ENCODE measurements at regions of chr10 and their contacts with region 1.

Region 1: GRCh38 chr10:101646364-101646763 is 48.6 kb downstream of the FBXW4 start:
- DNase-seq: no peak
- ATAC-seq: no peak
- H3K4me3 Mint-ChIP-seq: no peak overlapping the region
- H3K27ac Mint-ChIP-seq: no peak overlapping the region
- H3K4me1 Mint-ChIP-seq: peaks cover 2% of the 10 kb centered on the region
- H3K27me3 Mint-ChIP-seq: no peaks in the 10 kb centered on the region

Region 2: DNA sequence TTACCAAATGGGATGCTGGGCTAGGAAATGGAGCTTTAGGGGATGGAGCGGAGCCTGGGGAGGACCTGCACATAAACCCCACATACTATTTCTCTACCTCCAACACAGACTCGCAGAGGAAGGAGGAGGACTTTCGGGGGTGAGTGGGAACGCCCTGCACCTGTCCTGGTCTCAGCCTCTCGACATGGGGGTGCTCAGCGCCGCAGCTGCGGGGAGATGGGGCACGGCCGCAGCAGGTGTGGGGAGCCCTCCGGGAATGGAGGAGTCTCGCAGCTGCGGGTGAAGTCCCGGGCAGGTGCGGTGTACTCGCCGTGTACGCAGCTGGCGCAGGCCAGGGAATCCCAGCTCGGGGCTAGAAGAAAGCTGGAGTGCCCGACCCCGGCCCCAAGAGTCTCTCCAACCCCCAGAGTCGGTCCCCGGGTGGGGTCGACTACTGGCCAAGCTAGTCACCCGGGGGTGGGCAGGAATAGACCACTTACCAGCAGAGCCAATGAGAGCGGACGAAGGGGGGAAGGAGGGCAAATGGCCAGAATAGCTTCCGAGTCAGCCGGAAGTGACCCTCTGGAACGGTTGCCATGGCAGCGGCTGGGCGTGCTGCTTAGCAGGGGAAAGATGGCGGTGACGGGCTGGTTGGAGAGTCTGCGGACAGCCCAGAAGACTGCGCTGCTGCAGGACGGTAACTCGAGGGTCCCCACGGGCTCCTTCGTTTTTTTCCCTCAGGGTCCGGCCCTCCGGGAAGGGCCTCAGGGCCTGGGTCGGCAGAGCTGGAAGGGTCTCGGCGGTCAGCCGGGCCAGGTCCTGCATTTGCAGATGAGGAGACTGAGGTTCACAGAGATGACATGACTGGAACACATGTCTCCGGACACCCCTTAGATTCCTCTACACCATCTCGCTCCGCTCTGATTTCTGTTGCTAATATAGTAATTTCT is 58.4 kb before region 1 on chr10 and contains the starts of genes DPCD and POLL:
- CTCF ChIA-PET with region 1: no interaction called
- POLR2A ChIA-PET with region 1: no interaction called
- intact Hi-C with region 1: no loop called
- DNase-seq: peak; percentile 97
- ATAC-seq: peak; percentile 98
- H3K4me3 Mint-ChIP-seq: peak within 1 kb of the TSS; percentile 86
- H3K27ac Mint-ChIP-seq: peak within 1 kb of the TSS; percentile 81
- H3K4me1 Mint-ChIP-seq: peaks cover 18% of the 10 kb centered on the region
- H3K27me3 Mint-ChIP-seq: no peaks in the 10 kb centered on the region
- total RNA-seq, gene DPCD: 15.5 to 19.3 TPM
- total RNA-seq, gene POLL: 30.2 to 31.4 TPM

Region 3: GRCh38 chr10:101629837-101630632 is 16.3 kb before region 1 on chr10:
- CTCF ChIA-PET with region 1: no interaction called
- POLR2A ChIA-PET with region 1: no interaction called
- intact Hi-C with region 1: loop called in 1 of 2 experiments (anchors 2 kb)
- DNase-seq: no peak
- ATAC-seq: no peak
- H3K4me3 Mint-ChIP-seq: no peak overlapping the region
- H3K27ac Mint-ChIP-seq: no peak overlapping the region
- H3K4me1 Mint-ChIP-seq: peaks cover 5% of the 10 kb centered on the region
- H3K27me3 Mint-ChIP-seq: no peaks in the 10 kb centered on the region

Region 4: DNA sequence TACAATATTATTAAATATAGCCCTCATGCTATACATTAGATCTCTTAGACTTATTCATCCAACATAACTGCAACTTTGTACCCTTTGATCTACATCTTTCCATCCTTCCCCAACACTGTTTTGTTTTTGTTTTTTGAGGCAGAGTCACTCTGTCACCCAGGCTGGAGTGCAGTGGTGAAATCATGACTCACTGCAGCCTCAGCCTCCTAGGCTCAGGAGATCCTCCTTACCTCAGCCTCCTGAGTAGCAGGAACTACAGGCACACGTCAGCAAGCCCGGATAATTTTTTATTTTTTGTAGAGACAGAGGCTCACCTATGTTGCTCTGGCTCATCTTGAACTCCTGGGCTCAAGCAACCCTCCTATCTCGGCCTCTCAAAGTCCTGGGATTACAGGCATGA is 1493.4 kb after region 1 on chr10:
- CTCF ChIA-PET with region 1: no interaction called
- POLR2A ChIA-PET with region 1: no interaction called
- intact Hi-C with region 1: no loop called
- DNase-seq: peak; percentile 25
- ATAC-seq: peak; percentile 35
- H3K4me3 Mint-ChIP-seq: no peak overlapping the region
- H3K27ac Mint-ChIP-seq: no peak overlapping the region
- H3K4me1 Mint-ChIP-seq: peaks cover 23% of the 10 kb centered on the region
- H3K27me3 Mint-ChIP-seq: no peaks in the 10 kb centered on the region